ENCODE measurements at regions of chr2 and their contacts with region 1.

Region 1: DNA sequence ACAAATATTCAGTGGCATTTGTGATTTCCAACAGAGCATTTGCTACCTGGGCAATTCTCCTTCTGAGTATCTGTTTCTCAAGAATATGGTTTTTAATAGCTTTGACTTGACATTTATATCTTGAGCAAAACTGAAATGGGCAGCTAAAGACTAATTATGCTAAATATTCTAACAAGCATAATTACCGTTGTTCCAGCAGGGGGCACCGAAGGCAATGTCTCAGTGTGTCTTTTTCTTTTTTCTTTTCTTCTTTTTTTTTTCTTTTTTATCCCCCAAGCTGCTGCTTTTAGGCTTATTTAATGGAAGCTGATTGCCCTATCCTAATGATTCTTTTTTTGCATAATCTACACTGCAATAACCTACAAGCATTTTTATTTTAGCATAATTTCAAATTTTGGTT is 138.9 kb upstream of the NABP1 start:
- DNase-seq: peak; percentile 18
- ATAC-seq: peak; percentile 53; the same call in 1 of the 2 replicates
- H3K4me3 ChIP-seq: no peak overlapping the region
- H3K27ac ChIP-seq: no peak overlapping the region
- H3K4me1 ChIP-seq: no peaks in the 10 kb centered on the region
- H3K27me3 ChIP-seq: no peaks in the 10 kb centered on the region
- CTCF ChIP-seq: peak; percentile 38 to 71 (median 53); a peak in 5 of 6 replicates
- POLR2A ChIP-seq: no peak
- RAD21 ChIP-seq: peak; percentile 49

Region 2: GRCh38 chr2:191555092-191555742 is 16.1 kb after region 1 on chr2:
- CTCF ChIA-PET with region 1: interaction called, 11 read pairs
- POLR2A ChIA-PET with region 1: no interaction called
- RAD21 ChIA-PET with region 1: interaction called in 1 of 2 experiments, 3 read pairs
- intact Hi-C with region 1: no loop called
- DNase-seq: peak; percentile 73
- ATAC-seq: peak; percentile 98
- H3K4me3 ChIP-seq: no peak overlapping the region
- H3K27ac ChIP-seq: no peak overlapping the region
- H3K4me1 ChIP-seq: peaks cover 0 to 5% of the 10 kb centered on the region in 2 experiments; a peak in 2 of 4 replicates
- H3K27me3 ChIP-seq: no peaks in the 10 kb centered on the region
- CTCF ChIP-seq: peak; percentile 56 to 80 (median 66); a peak in 5 of 6 replicates
- POLR2A ChIP-seq: no peak
- RAD21 ChIP-seq: peak; percentile 92

Region 3: GRCh38 chr2:191571163-191571769 is 32.2 kb after region 1 on chr2:
- CTCF ChIA-PET with region 1: no interaction called
- POLR2A ChIA-PET with region 1: no interaction called
- RAD21 ChIA-PET with region 1: no interaction called
- intact Hi-C with region 1: no loop called
- DNase-seq: peak; percentile 36
- ATAC-seq: peak; percentile 73
- H3K4me3 ChIP-seq: peak overlapping the region; percentile 9 to 45; a peak in 3 of 4 replicates
- H3K27ac ChIP-seq: no peak overlapping the region
- H3K4me1 ChIP-seq: peaks cover 2 to 21% of the 10 kb centered on the region in 2 experiments; a peak in 3 of 4 replicates
- H3K27me3 ChIP-seq: no peaks in the 10 kb centered on the region
- CTCF ChIP-seq: peak in 2 of 3 experiments; percentile 46 to 71; a peak in 3 of 6 replicates
- POLR2A ChIP-seq: no peak
- RAD21 ChIP-seq: peak; percentile 81